Mammary epithelial cell (primary cell): ENCODE measurements at regions of chr21 and their contacts with region 1.

Region 1: GRCh38 chr21:42258153-42258884 is 39.4 kb downstream of the ABCG1 start:
- DNase-seq: peak; percentile 31
- H3K4me3 ChIP-seq: no peak overlapping the region
- H3K27ac ChIP-seq: no peak overlapping the region
- H3K4me1 ChIP-seq: no peaks in the 10 kb centered on the region
- H3K27me3 ChIP-seq: no peaks in the 10 kb centered on the region
- CTCF ChIP-seq: peak; percentile 73 to 91

Region 2: DNA sequence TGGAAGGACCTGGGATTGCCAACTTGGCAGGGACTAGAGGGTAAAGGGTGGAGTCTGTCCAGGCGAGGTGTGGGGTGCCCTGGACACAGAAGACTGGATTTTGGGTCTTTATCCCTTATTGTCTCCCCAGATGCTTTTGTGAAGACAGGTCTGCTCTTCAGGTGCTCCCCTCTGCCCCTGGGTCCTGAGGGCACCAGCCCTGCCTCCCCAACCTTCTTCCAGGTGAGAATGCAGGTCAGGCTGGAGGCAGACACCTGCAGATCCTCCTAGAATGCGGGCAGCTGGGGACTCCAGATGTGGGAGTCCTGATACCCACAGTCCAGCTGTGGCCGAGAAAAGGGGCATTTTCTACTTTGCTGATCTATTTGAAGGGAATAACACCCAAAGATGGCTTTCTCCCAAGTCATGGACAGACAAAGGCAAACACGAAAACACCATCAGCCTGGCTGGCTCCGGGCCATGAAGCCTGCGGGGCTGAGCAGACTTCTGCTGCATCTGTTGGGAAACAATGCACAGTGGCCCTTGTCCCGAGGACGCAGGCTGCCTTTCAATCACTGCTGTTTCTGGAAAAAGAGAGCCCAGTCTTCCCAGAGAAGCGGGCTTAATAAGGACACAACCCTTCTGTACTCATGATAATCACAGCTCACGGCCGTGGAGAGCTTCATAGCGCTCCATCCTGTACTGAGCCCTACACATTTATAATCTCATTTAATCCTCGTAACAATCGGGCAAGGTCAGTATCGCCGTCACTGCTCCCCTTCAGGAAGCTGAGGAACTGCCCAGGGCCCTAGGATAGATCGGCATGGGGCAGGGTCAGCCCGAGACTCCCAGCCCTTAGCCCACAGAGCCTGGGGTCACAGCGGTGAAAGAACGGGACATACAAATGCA is 101.4 kb before region 1 on chr21:
- CTCF ChIA-PET with region 1: no interaction called
- dilution Hi-C with region 1: no loop called
- in situ Hi-C with region 1: loop called (anchors 10 kb)
- intact Hi-C with region 1: no loop called
- DNase-seq: no peak
- H3K4me3 ChIP-seq: no peak overlapping the region
- H3K27ac ChIP-seq: no peak overlapping the region
- H3K4me1 ChIP-seq: no peaks in the 10 kb centered on the region
- H3K27me3 ChIP-seq: no peaks in the 10 kb centered on the region
- CTCF ChIP-seq: no peak

Region 3: DNA sequence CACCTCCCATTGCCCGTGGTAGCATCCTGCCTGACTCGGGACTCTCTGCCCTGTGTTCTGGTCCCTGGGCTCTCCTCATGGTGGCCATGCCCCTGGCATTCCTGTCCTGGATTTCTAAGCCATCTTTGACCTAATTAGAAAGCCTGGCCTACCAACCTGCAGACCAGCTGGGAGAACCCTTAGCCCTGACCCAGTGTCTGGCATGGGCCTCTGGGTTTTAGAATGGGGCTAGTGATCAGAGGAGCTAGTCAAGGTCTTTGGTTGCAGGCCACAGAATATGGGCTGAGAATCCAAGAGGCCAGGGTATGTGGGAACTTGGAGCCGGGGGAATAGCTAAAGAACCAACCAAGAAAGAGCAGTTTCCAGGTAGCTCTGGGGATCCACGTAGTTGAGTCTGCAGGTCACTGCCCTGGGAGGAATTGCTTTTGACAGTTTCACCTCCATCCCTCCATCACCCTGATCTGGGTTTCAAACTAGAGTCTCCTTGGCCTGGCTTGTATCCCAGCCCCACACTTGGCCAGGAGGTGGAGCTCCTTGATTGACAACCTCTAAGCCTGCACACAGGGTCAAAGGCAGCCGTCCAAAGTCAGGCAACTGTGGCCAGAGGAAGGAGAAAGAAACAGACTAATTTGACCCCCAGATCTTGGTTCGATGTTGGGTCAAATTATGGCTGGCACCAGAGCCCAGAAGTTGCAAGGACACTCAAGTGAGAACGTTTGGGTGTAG is 94.1 kb before region 1 on chr21:
- CTCF ChIA-PET with region 1: interaction called, 4 read pairs
- dilution Hi-C with region 1: no loop called
- in situ Hi-C with region 1: loop called (anchors 10 kb)
- intact Hi-C with region 1: loop called (anchors 1 kb)
- DNase-seq: peak; percentile 20
- H3K4me3 ChIP-seq: no peak overlapping the region
- H3K27ac ChIP-seq: no peak overlapping the region
- H3K4me1 ChIP-seq: no peaks in the 10 kb centered on the region
- H3K27me3 ChIP-seq: no peaks in the 10 kb centered on the region
- CTCF ChIP-seq: peak; percentile 50 to 65

Region 4: DNA sequence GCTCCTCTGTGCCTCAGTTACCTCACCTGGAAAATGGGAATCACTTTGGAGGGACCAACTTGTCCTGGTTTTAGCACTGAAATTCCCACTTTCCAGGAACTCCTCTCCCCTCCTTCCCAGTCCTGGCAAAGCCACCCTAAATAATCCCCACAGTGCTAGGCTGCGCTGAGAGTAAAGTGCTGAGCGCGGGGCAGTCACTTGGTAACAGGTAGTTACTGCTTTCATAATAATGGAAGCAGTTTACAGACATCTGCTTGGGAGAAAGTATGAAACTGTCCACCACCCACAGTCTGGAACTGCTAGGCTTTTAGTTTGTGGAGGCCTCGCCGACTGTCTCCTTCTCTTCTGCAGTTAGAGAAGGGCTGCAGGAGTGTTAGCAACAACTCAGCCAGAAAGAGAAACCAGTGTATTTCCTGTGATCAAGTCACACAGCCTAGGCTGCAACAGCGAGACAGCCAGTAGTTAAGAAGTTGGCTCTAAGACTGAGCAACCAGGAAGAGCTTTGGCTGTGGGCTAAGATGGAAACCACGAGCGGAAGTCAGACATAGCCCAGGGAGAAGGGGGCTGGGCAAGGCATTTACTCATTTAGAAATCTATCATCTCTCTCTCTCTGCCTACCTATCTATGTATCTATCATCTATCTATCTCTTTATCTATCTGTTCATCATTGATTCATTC is 70.2 kb before region 1 on chr21:
- CTCF ChIA-PET with region 1: no interaction called
- dilution Hi-C with region 1: no loop called
- in situ Hi-C with region 1: no loop called
- intact Hi-C with region 1: no loop called
- DNase-seq: peak; percentile 12
- H3K4me3 ChIP-seq: no peak overlapping the region
- H3K27ac ChIP-seq: no peak overlapping the region
- H3K4me1 ChIP-seq: peaks cover 22% of the 10 kb centered on the region
- H3K27me3 ChIP-seq: no peaks in the 10 kb centered on the region
- CTCF ChIP-seq: no peak

Region 5: GRCh38 chr21:42234464-42235241 is 23.7 kb before region 1 on chr21:
- CTCF ChIA-PET with region 1: interaction called, 4 read pairs
- dilution Hi-C with region 1: no loop called
- in situ Hi-C with region 1: no loop called
- intact Hi-C with region 1: loop called (anchors 2 kb)
- DNase-seq: peak; percentile 40
- H3K4me3 ChIP-seq: peak overlapping the region; percentile 18 to 57 (median 52)
- H3K27ac ChIP-seq: no peak overlapping the region
- H3K4me1 ChIP-seq: peaks cover 19% of the 10 kb centered on the region
- H3K27me3 ChIP-seq: no peaks in the 10 kb centered on the region
- CTCF ChIP-seq: no peak

Region 6: DNA sequence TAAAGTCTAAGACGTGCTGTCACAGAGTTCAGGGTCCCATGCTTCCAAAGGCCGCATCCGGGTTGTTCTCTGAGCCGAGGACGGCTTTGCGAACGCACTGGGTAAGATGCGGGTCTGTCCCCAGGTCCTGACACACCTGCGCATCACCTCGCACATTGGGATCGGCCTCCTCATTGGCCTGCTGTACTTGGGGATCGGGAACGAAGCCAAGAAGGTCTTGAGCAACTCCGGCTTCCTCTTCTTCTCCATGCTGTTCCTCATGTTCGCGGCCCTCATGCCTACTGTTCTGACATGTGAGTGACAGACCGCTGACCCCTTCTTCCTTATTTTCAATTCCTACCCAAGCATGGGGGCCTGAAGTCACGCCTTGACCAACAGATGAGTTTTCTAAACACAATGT is 31.6 kb after region 1 on chr21:
- CTCF ChIA-PET with region 1: no interaction called
- dilution Hi-C with region 1: loop called (anchors 5 kb)
- in situ Hi-C with region 1: no loop called
- intact Hi-C with region 1: no loop called
- DNase-seq: no peak
- H3K4me3 ChIP-seq: no peak overlapping the region
- H3K27ac ChIP-seq: no peak overlapping the region
- H3K4me1 ChIP-seq: no peaks in the 10 kb centered on the region
- H3K27me3 ChIP-seq: no peaks in the 10 kb centered on the region
- CTCF ChIP-seq: no peak

Region 7: GRCh38 chr21:42309753-42310221 is 51.5 kb after region 1 on chr21:
- CTCF ChIA-PET with region 1: no interaction called
- dilution Hi-C with region 1: loop called (anchors 5 kb)
- in situ Hi-C with region 1: no loop called
- intact Hi-C with region 1: no loop called
- DNase-seq: no peak
- H3K4me3 ChIP-seq: no peak overlapping the region
- H3K27ac ChIP-seq: no peak overlapping the region
- H3K4me1 ChIP-seq: no peaks in the 10 kb centered on the region
- H3K27me3 ChIP-seq: no peaks in the 10 kb centered on the region
- CTCF ChIP-seq: peak; percentile 70 to 80